ENCODE measurements at regions of chr17 and their contacts with region 1.

Region 1: GRCh38 chr17:77542551-77543490 is 402.1 kb downstream of the SEC14L1 start:
- DNase-seq: peak; percentile 78
- ATAC-seq: peak; percentile 88
- H3K4me3 Mint-ChIP-seq: no peak overlapping the region
- H3K27ac Mint-ChIP-seq: no peak overlapping the region
- H3K4me1 Mint-ChIP-seq: peaks cover 7% of the 10 kb centered on the region
- H3K27me3 Mint-ChIP-seq: peaks cover 21% of the 10 kb centered on the region

Region 2: GRCh38 chr17:77440560-77440981 is 102.2 kb before region 1 on chr17:
- CTCF ChIA-PET with region 1: no interaction called
- POLR2A ChIA-PET with region 1: no interaction called
- DNase-seq: no peak
- ATAC-seq: no peak
- H3K4me3 Mint-ChIP-seq: peak overlapping the region; percentile 72
- H3K27ac Mint-ChIP-seq: peak overlapping the region; percentile 90
- H3K4me1 Mint-ChIP-seq: peaks cover 98% of the 10 kb centered on the region
- H3K27me3 Mint-ChIP-seq: no peaks in the 10 kb centered on the region

Region 3: DNA sequence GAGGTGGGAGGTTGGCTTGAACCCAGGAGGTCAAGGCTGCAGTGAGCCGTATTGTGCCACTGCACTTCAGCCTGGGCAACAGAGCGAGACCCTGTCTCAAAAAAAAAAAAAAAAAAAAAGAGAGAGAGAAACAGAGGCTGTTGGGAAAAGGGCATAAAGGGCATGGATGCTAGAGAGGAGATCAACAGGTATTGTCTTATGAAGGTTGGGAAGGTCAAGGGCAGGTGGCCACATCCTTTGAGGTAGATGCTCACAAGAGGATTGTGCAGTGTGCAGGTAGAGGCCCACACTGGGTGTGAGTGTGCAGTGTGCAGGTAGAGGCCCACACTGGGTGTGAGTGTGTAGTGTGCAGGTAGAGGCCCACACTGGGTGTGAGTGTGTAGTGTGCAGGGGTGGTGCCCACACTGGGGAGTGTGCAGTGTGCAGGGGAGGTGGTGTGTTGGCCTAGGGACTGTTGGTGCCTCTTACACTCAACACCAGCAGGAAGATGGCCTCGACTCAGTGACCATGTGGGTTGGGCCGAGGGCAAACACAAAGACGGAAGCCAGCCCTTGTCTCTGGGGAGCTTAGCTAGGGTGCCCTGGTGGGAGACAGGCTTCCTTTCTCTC is 10.7 kb after region 1 on chr17:
- CTCF ChIA-PET with region 1: interaction called, 22 read pairs
- POLR2A ChIA-PET with region 1: no interaction called
- DNase-seq: no peak
- ATAC-seq: no peak
- H3K4me3 Mint-ChIP-seq: no peak overlapping the region
- H3K27ac Mint-ChIP-seq: no peak overlapping the region
- H3K4me1 Mint-ChIP-seq: no peaks in the 10 kb centered on the region
- H3K27me3 Mint-ChIP-seq: peaks cover 19% of the 10 kb centered on the region

Region 4: GRCh38 chr17:77631301-77631700 is 88.5 kb after region 1 on chr17:
- CTCF ChIA-PET with region 1: no interaction called
- POLR2A ChIA-PET with region 1: no interaction called
- DNase-seq: no peak
- ATAC-seq: no peak
- H3K4me3 Mint-ChIP-seq: no peak overlapping the region
- H3K27ac Mint-ChIP-seq: no peak overlapping the region
- H3K4me1 Mint-ChIP-seq: peaks cover 16% of the 10 kb centered on the region
- H3K27me3 Mint-ChIP-seq: peaks cover 18% of the 10 kb centered on the region

Measured in activated CD8-positive, alpha-beta T cell treated with anti-CD3 and anti-CD28 coated beads, Interleukin-2, amount 10 ng/mL, durations not matched to agents 7 days and 5 days (primary cell).